Right lobe of liver (tissue), 6 donors: ENCODE measurements at regions of chr13 and their contacts with region 1.

Region 1: GRCh38 chr13:26707122-26708006 is 53.2 kb downstream of the GPR12 start:
- DNase-seq: no peak
- ATAC-seq: peak; percentile 63 to 89 (median 84)
- H3K4me3 ChIP-seq: no peak overlapping the region
- H3K27ac ChIP-seq: no peak overlapping the region
- H3K4me1 ChIP-seq: no peaks in the 10 kb centered on the region
- H3K27me3 ChIP-seq: no peaks in the 10 kb centered on the region
- CTCF ChIP-seq: peak; percentile 41 to 55 (median 51)
- POLR2A ChIP-seq: no peak

Region 2: DNA sequence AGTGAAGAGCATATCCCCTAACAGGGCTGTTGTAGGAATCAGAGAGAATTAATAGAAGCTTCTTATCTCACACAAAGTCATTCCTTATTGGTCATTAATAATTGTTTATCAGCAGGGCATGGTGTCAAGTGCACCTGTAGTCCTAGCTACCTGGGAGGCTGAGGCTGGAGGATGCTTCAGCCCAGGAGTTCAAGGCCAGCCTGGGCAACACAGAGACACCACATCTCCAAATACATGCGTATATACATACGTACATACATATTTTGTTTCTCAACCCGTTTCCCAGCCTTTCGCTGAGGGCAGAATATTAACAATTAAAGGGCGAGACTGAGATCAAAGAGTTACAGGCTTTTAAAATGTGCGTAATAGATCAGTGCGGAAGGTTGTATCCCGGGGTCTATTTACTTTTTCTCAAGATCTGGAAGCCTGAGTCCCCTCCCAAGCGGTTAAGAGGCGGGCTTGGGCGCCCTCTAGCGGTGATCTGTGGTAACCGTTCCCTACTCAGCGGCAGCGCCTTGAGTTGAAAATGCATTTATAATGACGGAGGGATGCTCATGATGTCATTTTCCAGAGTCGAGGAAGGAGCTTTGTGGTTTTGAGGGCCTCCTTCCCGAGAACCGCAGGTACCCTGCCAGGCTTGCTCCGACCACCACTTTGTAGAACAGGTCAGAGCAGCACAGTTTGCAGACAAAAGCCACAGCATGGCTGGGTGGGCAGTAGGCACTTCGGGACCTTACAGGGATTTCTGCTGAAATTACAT is 222.8 kb after region 1 on chr13:
- intact Hi-C with region 1: loop called in 1 of 2 experiments (anchors 10 kb)
- DNase-seq: peak; percentile 66 to 71 (median 66)
- ATAC-seq: peak; percentile 80 to 88 (median 85)
- H3K4me3 ChIP-seq: no peak overlapping the region
- H3K27ac ChIP-seq: no peak overlapping the region
- H3K4me1 ChIP-seq: no peaks in the 10 kb centered on the region
- H3K27me3 ChIP-seq: no peaks in the 10 kb centered on the region
- CTCF ChIP-seq: peak; percentile 66 to 96 (median 94)
- POLR2A ChIP-seq: no peak